GM10248 (cell line): ENCODE measurements at regions of chr6 and their contacts with region 1.

Region 1: GRCh38 chr6:593139-593906 is 63.6 kb downstream of the HUS1B start:
- DNase-seq: peak; percentile 67
- CTCF ChIP-seq: peak; percentile 42

Region 2: GRCh38 chr6:156010-156409 is 437.3 kb before region 1 on chr6:
- CTCF ChIA-PET with region 1: no interaction called
- POLR2A ChIA-PET with region 1: no interaction called
- DNase-seq: no peak
- CTCF ChIP-seq: no peak

Region 3: DNA sequence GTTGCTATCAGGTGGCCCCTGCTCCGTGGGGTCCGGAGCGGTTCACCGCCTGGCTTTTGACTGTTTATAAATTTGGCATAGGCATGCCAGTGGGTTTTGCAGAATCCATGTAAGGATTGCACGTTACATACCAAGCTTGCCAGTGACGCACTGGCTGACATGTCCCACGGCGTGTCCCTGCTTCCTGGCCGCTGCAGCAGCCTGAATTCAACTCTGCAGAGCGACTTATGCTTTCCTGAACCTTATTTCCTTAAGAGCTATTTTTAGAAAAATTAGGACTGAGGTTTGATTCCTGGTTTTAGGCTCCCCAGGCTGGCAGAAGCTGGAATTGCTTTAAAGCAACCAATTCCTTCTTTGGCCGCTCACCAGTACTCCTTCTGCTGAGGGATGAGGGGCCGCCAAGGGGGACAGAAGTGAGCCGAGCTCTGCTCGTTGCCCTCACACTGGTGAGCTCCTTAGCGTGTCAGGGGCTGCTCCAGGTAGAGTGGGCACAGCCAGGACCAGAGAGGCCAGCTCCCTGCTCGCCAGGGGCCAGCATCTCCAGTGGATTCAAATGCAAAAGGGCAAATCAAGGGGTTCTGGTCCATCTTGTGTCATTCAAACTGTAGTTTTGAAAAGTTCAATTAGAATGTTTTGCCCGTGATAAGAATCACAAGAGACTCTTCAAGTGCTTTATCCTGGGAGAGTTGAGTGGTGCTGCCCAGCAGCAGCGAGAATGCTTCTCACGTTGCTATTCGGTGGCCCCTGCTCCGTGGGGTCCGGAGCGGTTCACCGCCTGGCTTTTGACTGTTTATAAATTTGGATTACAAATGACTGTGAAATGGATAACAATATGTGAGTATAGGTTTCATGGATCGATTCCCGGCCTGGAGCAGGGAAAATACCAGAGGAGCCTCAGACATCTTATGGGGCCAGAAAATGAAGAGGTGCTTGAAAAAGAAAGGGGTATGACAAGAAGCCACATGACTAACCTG is 219.3 kb before region 1 on chr6:
- CTCF ChIA-PET with region 1: no interaction called
- POLR2A ChIA-PET with region 1: no interaction called
- DNase-seq: no peak
- CTCF ChIP-seq: no peak

Region 4: GRCh38 chr6:537114-537513 is 56.2 kb before region 1 on chr6:
- CTCF ChIA-PET with region 1: no interaction called
- POLR2A ChIA-PET with region 1: no interaction called
- DNase-seq: no peak
- CTCF ChIP-seq: no peak

Region 5: DNA sequence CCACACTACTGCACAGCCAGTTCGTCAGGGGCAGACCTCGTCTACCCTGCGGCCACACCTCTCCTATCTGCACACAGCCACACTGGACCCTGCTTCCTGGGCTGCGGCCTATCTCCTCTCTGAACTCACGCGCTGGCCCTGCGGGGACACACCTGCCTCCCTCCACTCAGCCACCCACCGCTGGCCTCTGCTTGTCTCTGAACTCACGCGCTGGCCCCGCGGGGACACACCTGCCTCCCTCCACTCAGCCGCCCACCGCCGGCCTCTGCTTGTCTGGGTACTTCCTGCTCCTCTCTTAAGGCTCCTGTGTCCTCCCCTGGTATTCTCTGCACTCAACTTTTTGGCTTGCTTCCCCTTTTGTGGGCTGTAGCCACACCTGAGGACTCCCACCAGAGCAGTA is 11.3 kb after region 1 on chr6:
- CTCF ChIA-PET with region 1: interaction called, 11 read pairs
- POLR2A ChIA-PET with region 1: no interaction called
- DNase-seq: no peak
- CTCF ChIP-seq: no peak

Region 6: DNA sequence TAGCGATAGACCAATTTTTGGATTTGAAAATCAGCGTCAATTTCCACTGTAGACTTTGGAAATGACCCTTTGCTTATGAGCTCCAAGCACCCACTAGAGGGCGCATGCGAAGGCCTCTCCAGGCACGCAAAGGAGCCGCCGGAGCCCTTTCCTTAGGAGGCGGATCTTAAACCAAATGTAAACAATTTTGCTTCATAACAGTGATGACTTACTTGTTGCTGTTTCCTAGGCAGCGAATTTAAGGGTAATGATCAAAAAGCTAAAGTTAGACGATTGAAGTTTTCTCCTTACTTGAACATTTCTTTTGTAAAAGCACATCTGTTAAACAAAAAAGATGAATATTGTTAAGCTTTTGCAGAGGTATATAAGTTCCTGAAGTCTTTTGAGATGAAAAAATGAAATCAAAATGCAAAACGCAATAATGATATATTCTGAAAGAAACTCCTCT is 128.8 kb after region 1 on chr6:
- CTCF ChIA-PET with region 1: interaction called, 33 read pairs
- POLR2A ChIA-PET with region 1: no interaction called
- DNase-seq: peak; percentile 79
- CTCF ChIP-seq: peak; percentile 93

Region 7: DNA sequence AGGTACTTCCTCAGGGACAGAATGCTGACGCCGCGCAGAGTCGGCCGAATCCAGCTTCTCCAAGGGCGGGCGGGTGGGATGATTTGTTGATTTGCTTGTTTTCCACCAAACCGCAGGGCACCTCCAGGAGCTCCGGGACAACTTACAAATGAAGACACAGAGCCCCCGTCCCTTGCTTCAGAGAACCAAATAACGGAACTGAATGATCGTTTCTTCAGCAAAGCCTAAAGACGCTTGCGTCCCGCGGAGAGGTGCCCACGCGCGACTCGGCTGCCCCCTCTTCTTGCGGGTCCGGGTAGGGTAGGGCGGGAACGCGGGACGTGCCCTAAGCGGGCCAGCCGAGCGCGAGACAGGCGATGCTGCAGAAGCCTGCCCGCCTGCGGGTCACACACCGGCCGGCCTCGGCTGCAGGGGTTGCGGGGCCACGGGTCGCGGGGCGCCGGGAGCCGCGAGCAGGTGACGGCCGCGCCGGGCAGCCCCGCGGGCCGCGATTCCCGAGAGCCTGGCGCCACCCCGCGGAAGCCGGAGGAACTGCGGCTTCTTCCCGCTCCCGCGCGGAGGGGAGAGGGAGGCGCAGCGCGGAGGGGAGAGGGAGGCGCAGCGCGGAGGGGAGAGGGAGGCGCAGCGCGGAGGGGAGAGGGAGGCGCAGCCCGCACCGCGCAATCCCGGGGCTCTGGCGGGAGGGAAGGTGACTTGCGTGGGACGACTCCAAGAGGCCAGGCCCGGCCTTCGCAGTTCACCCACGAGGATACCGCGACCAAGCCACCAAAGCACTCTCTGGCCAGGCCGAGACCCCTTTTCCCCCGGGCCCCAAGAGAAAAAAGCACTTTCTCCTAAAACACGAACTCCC is 788.4 kb after region 1 on chr6:
- CTCF ChIA-PET with region 1: interaction called, 11 read pairs
- POLR2A ChIA-PET with region 1: no interaction called
- DNase-seq: peak; percentile 76
- CTCF ChIP-seq: peak; percentile 89

Region 8: GRCh38 chr6:1436334-1437306 is 843.3 kb after region 1 on chr6:
- CTCF ChIA-PET with region 1: interaction called, 17 read pairs
- POLR2A ChIA-PET with region 1: no interaction called
- DNase-seq: peak; percentile 83
- CTCF ChIP-seq: peak; percentile 57